Right ventricle myocardium inferior (tissue), 1 donor: ENCODE measurements at regions of chr6 and their contacts with region 1.

Region 1: GRCh38 chr6:29705389-29706231 is 17.6 kb upstream of the HLA-F start:
- DNase-seq: no peak
- ATAC-seq: peak; percentile 58

Region 2: GRCh38 chr6:29593199-29593855 is 112.3 kb before region 1 on chr6:
- intact Hi-C with region 1: no loop called
- DNase-seq: no peak
- ATAC-seq: no peak

Region 3: GRCh38 chr6:29752451-29753308 is 47.1 kb after region 1 on chr6:
- intact Hi-C with region 1: loop called (anchors 1 kb)
- DNase-seq: peak; percentile 96
- ATAC-seq: peak; percentile 87

Region 4: GRCh38 chr6:29834564-29835436 is 129.2 kb after region 1 on chr6:
- intact Hi-C with region 1: loop called (anchors 1 kb)
- DNase-seq: peak; percentile 72
- ATAC-seq: peak; percentile 48

Region 5: DNA sequence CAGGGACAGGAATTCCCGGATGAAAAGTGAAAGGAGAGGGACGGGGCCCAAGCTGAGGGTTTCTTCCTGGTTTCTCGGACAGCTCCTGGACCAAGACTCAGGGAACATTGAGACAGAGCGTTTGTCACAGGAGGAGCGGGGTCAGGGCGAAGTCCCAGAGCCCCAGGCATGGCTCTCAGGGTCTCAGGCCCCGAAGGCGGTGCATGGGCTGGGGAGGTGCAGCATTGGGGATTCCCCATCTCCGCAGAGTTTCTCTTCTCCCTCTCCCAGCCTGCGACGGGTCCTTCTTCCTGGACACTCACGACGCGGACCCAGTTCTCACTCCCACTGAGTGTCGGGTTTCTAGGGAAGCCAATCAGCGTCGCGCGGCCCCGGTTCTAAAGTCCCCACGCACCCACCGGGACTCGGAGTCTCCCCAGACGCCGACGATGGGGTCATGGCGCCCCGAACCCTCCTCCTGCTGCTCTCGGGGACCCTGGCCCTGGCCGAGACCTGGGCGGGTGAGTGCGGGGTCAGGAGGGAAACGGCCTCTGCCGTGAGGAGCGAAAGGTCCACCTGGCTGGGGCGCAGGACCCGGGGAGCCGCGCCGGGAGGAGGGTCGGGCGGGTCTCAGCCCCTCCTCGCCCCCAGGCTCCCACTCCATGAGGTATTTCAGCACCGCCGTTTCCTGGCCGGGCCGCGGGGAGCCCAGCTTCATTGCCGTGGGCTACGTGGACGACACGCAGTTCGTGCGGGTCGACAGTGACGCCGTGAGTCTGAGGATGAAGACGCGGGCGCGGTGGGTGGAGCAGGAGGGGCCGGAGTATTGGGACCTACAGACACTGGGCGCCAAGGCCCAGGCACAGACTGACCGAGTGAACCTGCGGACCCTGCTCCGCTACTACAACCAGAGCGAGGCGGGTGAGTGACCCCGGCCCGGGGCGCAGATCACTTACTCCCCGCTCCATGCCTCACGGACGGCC is 300.8 kb after region 1 on chr6:
- intact Hi-C with region 1: loop called (anchors 5 kb)
- DNase-seq: peak; percentile 76
- ATAC-seq: peak; percentile 78